SK-N-SH (cell line): ENCODE measurements at regions of chr1 and their contacts with region 1.

Region 1: GRCh38 chr1:35451125-35451528 is 106.1 kb downstream of the KIAA0319L start:
- DNase-seq: peak; percentile 68
- H3K4me3 ChIP-seq: 0 out of 4 replicates have a peak overlapping the region, but pooled peaks of 1 of the 2 experiments have one; percentile 33
- H3K27ac ChIP-seq: peak overlapping the region in 1 of 2 experiments; percentile 61; a peak in 1 of 4 replicates
- H3K4me1 ChIP-seq: peaks cover 15 to 32% of the 10 kb centered on the region in 2 experiments
- H3K27me3 ChIP-seq: no peaks in the 10 kb centered on the region
- CTCF ChIP-seq: peak; percentile 89
- EP300 ChIP-seq: no peak
- RAD21 ChIP-seq: peak; percentile 84

Region 2: GRCh38 chr1:35428360-35428759 is 22.8 kb before region 1 on chr1:
- CTCF ChIA-PET with region 1: no interaction called
- POLR2A ChIA-PET with region 1: no interaction called
- DNase-seq: no peak
- H3K4me3 ChIP-seq: no peak overlapping the region
- H3K27ac ChIP-seq: no peak overlapping the region
- H3K4me1 ChIP-seq: peaks cover 0 to 7% of the 10 kb centered on the region in 2 experiments; a peak in 1 of 4 replicates
- H3K27me3 ChIP-seq: no peaks in the 10 kb centered on the region
- CTCF ChIP-seq: no peak
- EP300 ChIP-seq: no peak
- RAD21 ChIP-seq: no peak

Region 3: DNA sequence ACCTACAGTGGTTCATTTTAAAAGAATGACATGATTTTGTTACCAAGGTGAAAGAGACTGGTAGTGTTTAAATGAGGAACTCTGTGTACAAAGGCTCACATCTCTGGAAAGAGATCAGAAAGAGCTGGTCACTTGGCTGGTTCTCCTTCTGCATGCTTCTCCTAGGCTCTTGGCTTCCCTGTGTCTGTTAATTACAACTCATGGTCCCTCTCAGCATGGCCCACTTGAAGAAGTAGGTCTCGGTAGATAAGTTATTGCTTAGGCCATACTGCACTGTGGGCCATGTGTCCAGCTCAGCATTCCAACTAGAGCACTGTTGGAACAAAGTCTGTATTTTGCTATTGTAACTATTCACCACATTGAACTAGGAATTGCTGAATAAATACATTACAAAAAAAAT is 15.0 kb after region 1 on chr1:
- CTCF ChIA-PET with region 1: interaction called, 20 read pairs
- POLR2A ChIA-PET with region 1: no interaction called
- DNase-seq: no peak
- H3K4me3 ChIP-seq: no peak overlapping the region
- H3K27ac ChIP-seq: no peak overlapping the region
- H3K4me1 ChIP-seq: no peaks in the 10 kb centered on the region
- H3K27me3 ChIP-seq: no peaks in the 10 kb centered on the region
- CTCF ChIP-seq: no peak
- EP300 ChIP-seq: no peak
- RAD21 ChIP-seq: no peak

Region 4: DNA sequence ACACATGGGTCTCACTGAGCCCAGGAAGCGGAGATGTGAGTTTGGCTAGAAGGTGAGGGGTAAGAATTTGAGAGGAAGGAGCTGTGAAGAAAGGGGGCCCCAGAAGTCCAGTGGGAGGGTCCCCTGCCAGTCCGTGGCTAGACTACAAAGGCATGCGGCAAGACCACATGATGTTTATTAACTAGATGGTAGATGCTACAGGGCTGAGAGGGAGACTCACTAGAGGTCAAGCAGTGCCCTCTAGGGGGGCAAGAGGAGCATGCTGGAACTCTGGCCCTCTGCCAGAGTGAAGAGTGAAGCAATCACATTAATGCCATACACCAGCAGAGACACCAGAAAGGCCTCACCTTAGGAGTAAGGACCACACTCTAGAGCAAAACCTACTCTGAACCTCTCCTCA is 93.9 kb after region 1 on chr1:
- CTCF ChIA-PET with region 1: interaction called, 31 read pairs
- POLR2A ChIA-PET with region 1: no interaction called
- DNase-seq: peak; percentile 58
- H3K4me3 ChIP-seq: no peak overlapping the region
- H3K27ac ChIP-seq: no peak overlapping the region
- H3K4me1 ChIP-seq: peaks cover 11 to 18% of the 10 kb centered on the region in 2 experiments; a peak in 3 of 4 replicates
- H3K27me3 ChIP-seq: no peaks in the 10 kb centered on the region
- CTCF ChIP-seq: peak; percentile 52
- EP300 ChIP-seq: no peak
- RAD21 ChIP-seq: peak; percentile 72

Region 5: DNA sequence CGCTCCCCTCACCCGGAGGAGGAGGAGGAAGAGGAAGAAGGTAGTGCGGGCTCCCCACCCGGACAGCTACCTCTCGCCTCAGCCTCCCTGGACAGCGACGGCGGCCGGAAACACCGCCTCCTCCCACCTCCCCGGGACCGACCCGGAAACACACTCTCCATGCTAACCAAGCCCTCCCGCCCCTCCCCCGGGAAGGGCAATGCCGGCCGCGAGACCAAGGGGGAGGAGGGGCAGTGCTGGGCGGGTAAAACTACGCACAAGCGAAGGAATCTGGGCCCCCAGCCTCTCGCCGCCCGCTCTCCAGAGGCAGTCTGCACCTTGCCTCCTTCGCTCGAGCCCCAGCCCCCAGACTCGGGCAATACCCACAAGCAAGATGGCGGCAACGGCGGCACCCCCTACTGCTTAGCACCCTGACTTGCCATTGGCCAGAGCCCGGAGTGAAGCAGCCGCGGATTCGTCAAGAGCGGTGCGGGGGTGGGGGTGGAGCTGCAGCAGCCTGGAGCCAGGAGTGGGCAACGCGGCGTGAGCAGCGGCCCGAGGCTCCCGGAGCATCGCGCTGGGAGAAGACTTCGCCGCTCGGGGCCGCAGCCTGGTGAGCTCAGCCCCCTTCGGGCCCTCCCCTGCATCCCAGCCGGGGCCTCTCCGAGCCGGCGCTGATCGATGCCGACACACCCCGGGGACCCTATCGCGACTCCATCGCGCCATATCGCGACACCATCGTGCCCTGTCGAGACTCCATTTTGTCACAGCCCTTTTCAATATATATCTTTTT is 106.4 kb after region 1 on chr1 and contains the starts of genes KIAA0319L and NCDN:
- CTCF ChIA-PET with region 1: interaction called, 81 read pairs
- POLR2A ChIA-PET with region 1: interaction called, 11 read pairs
- DNase-seq: peak; percentile 96
- H3K4me3 ChIP-seq: peak within 1 kb of the TSS; percentile 88 to 89
- H3K27ac ChIP-seq: peak within 1 kb of the TSS; percentile 91 to 99
- H3K4me1 ChIP-seq: peaks cover 4 to 41% of the 10 kb centered on the region in 2 experiments; a peak in 3 of 4 replicates
- H3K27me3 ChIP-seq: no peaks in the 10 kb centered on the region
- CTCF ChIP-seq: no peak
- EP300 ChIP-seq: no peak
- RAD21 ChIP-seq: no peak
- polyA plus RNA-seq, gene KIAA0319L: 51.9 and 63.2 TPM in 2 replicates
- polyA plus RNA-seq, gene NCDN: 34.6 and 38.3 TPM in 2 replicates

Region 6: DNA sequence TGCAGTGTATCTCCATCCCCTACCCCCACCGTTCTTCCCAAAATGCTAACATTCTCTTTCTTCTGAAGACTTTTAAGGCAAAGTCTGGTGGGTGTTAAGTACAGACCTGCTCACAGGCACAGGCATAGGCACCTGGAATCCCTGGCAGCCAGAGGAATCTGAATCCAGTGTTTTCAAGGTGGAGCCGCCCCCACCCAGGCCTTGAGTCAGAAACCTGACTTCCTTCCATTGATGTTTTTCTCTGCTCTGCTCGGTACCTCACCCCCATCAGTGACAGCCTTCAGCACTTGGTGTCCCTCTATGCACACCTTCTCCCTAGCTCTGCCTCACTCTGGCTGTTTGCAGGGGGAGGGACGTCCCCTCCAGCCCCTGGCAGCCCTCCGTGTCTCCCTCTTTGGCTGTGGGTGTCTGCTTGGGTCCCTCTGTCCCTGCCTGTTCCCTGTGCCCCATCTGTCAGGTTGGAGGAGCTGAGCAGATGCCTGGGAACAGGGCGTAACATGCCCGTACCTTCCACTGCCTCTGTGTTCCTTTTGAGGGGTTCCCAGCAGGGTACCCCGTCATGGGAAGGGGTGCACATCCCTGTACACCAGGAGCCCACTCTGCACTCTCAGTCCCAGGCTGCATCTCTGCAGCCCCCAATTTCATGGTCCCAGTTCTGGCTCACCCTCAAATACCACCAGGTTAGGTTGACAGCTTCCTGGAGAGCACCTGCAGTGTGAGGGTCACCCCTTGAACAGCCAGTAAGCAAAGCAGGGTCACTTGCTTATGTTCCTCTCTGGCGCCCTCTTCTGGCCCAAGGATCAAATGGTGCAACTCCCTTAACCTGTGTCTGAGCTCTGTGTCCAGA is 113.1 kb after region 1 on chr1:
- CTCF ChIA-PET with region 1: interaction called, 157 read pairs
- POLR2A ChIA-PET with region 1: interaction called, 6 read pairs
- DNase-seq: peak; percentile 87
- H3K4me3 ChIP-seq: no peak overlapping the region; a peak in 1 of 4 replicates
- H3K27ac ChIP-seq: no peak overlapping the region
- H3K4me1 ChIP-seq: peaks cover 3 to 5% of the 10 kb centered on the region in 2 experiments; a peak in 1 of 4 replicates
- H3K27me3 ChIP-seq: no peaks in the 10 kb centered on the region
- CTCF ChIP-seq: peak; percentile 82
- EP300 ChIP-seq: no peak
- RAD21 ChIP-seq: peak; percentile 72

Region 7: DNA sequence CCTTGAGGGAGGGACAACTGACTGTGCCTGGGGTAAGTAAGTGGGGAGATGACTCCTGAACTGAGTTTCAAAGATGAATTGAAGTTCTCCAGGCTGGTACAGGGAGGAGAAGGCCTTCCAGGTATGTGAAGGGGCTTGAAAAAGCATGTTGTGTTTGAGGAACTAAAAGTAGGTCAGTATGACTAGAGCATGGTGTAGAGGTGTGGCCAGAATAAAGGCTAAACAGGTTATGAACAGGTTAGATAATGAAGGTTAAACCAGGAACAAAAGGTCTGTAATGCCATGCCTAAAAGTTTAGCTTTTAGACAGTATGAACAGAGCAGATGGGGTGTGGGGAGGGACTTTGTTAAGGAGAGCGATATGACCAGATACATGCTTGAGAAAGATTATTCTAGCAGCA is 326.0 kb after region 1 on chr1:
- CTCF ChIA-PET with region 1: interaction called, 17 read pairs
- POLR2A ChIA-PET with region 1: no interaction called
- DNase-seq: no peak
- H3K4me3 ChIP-seq: no peak overlapping the region
- H3K27ac ChIP-seq: no peak overlapping the region
- H3K4me1 ChIP-seq: no peaks in the 10 kb centered on the region
- H3K27me3 ChIP-seq: no peaks in the 10 kb centered on the region
- CTCF ChIP-seq: no peak
- EP300 ChIP-seq: no peak
- RAD21 ChIP-seq: no peak